ENCODE measurements at regions of chr10 and their contacts with region 1.

Region 1: GRCh38 chr10:99742701-99743100 is 10.7 kb downstream of the CUTC start:
- DNase-seq: peak; percentile 46
- ATAC-seq: peak; percentile 43; the same call in 1 of the 2 replicates
- H3K4me3 ChIP-seq: no peak overlapping the region
- H3K27ac ChIP-seq: no peak overlapping the region
- H3K4me1 ChIP-seq: peaks cover 22% of the 10 kb centered on the region
- H3K27me3 ChIP-seq: no peaks in the 10 kb centered on the region
- CTCF ChIP-seq: no peak

Region 2: GRCh38 chr10:99667108-99667751 is 75.5 kb before region 1 on chr10:
- CTCF ChIA-PET with region 1: interaction called, 10 read pairs
- POLR2A ChIA-PET with region 1: no interaction called
- intact Hi-C with region 1: no loop called
- DNase-seq: peak; percentile 71
- ATAC-seq: peak; percentile 99
- H3K4me3 ChIP-seq: no peak overlapping the region
- H3K27ac ChIP-seq: peak overlapping the region; percentile 14; the same call in 1 of the 2 replicates
- H3K4me1 ChIP-seq: peaks cover 13% of the 10 kb centered on the region
- H3K27me3 ChIP-seq: no peaks in the 10 kb centered on the region
- CTCF ChIP-seq: no peak

Region 3: GRCh38 chr10:99779335-99779734 is 36.6 kb after region 1 on chr10:
- CTCF ChIA-PET with region 1: no interaction called
- POLR2A ChIA-PET with region 1: no interaction called
- intact Hi-C with region 1: loop called (anchors 5 kb)
- DNase-seq: peak; percentile 59
- ATAC-seq: peak; percentile 65
- H3K4me3 ChIP-seq: peak overlapping the region; percentile 60
- H3K27ac ChIP-seq: peak overlapping the region; percentile 97
- H3K4me1 ChIP-seq: peaks cover 69% of the 10 kb centered on the region
- H3K27me3 ChIP-seq: no peaks in the 10 kb centered on the region
- CTCF ChIP-seq: no peak

Region 4: GRCh38 chr10:100562008-100562711 is 819.5 kb after region 1 on chr10:
- CTCF ChIA-PET with region 1: no interaction called
- POLR2A ChIA-PET with region 1: no interaction called
- intact Hi-C with region 1: no loop called
- DNase-seq: peak; percentile 21
- ATAC-seq: peak; percentile 42
- H3K4me3 ChIP-seq: no peak overlapping the region
- H3K27ac ChIP-seq: no peak overlapping the region
- H3K4me1 ChIP-seq: no peaks in the 10 kb centered on the region
- H3K27me3 ChIP-seq: no peaks in the 10 kb centered on the region
- CTCF ChIP-seq: peak; percentile 50